ENCODE measurements at regions of chr2 and their contacts with region 1.

Region 1: GRCh38 chr2:179340668-179341067 is 76.0 kb upstream of the SESTD1 start:
- DNase-seq: peak in 1 of 6 donors; percentile 11
- ATAC-seq: peak in 3 of 4 donors; percentile 62 to 73 (median 65)
- H3K4me3 ChIP-seq: no peak overlapping the region
- H3K27ac ChIP-seq: no peak overlapping the region
- H3K4me1 ChIP-seq: peaks cover 0 to 4% (median 0%) of the 10 kb centered on the region in 3 donors
- H3K27me3 ChIP-seq: no peaks in the 10 kb centered on the region
- CTCF ChIP-seq: no peak

Region 2: GRCh38 chr2:179226203-179226960 is 114.3 kb before region 1 on chr2:
- intact Hi-C with region 1: loop called in 1 of 3 experiments (anchors 10 kb)
- DNase-seq: peak in 4 of 6 donors; percentile 20 to 43 (median 34)
- ATAC-seq: peak; percentile 74 to 80 (median 79)
- H3K4me3 ChIP-seq: no peak overlapping the region
- H3K27ac ChIP-seq: peak overlapping the region in 2 of 4 donors; percentile 32 to 34
- H3K4me1 ChIP-seq: peaks cover 0 to 20% (median 16%) of the 10 kb centered on the region in 3 donors
- H3K27me3 ChIP-seq: no peaks in the 10 kb centered on the region
- CTCF ChIP-seq: no peak

Region 3: DNA sequence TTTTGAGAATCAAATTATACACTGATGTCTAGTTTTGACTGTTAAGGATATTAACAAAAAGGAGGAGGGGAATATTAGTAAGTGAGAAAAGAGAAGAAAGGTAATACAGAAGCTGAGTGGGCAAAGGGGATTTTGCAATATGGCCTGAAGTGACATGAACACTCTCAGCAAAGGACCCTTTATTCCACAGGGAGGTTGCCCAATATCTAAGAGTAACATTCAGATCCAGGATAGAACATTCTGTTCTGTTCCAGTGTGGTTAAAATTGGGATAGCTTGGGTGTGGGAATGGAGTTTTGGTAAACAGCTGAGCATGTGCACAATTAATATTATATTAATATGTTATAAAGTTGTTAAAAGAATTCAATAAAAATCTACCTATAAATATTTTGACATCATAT is 400.6 kb after region 1 on chr2:
- intact Hi-C with region 1: no loop called
- DNase-seq: no peak
- ATAC-seq: no peak
- H3K4me3 ChIP-seq: no peak overlapping the region
- H3K27ac ChIP-seq: no peak overlapping the region
- H3K4me1 ChIP-seq: no peaks in the 10 kb centered on the region
- H3K27me3 ChIP-seq: no peaks in the 10 kb centered on the region
- CTCF ChIP-seq: no peak